Heart right ventricle (tissue), 16 donors: ENCODE measurements at regions of chrX and their contacts with region 1.

Region 1: GRCh38 chrX:4547213-4547836 is 833.9 kb upstream of the PRKX start:
- DNase-seq: peak in 1 of 2 donors; percentile 3
- ATAC-seq: no peak
- H3K4me3 ChIP-seq: no peak overlapping the region
- H3K27ac ChIP-seq: no peak overlapping the region
- H3K4me1 ChIP-seq: no peaks in the 10 kb centered on the region
- H3K27me3 ChIP-seq: no peaks in the 10 kb centered on the region
- CTCF ChIP-seq: peak; percentile 44 to 93 (median 68)

Region 2: GRCh38 chrX:5113128-5113527 is 565.8 kb after region 1 on chrX:
- intact Hi-C with region 1: loop called in 5 of 10 experiments (anchors 5 to 10 kb)
- DNase-seq: no peak
- ATAC-seq: no peak
- H3K4me3 ChIP-seq: no peak overlapping the region
- H3K27ac ChIP-seq: no peak overlapping the region
- H3K4me1 ChIP-seq: no peaks in the 10 kb centered on the region
- H3K27me3 ChIP-seq: no peaks in the 10 kb centered on the region
- CTCF ChIP-seq: peak in 4 of 9 donors; percentile 16 to 42 (median 34)

Region 3: GRCh38 chrX:5122175-5122678 is 574.9 kb after region 1 on chrX:
- intact Hi-C with region 1: loop called in 5 of 10 experiments (anchors 10 kb)
- DNase-seq: no peak
- ATAC-seq: no peak
- H3K4me3 ChIP-seq: no peak overlapping the region
- H3K27ac ChIP-seq: no peak overlapping the region
- H3K4me1 ChIP-seq: no peaks in the 10 kb centered on the region
- H3K27me3 ChIP-seq: no peaks in the 10 kb centered on the region
- CTCF ChIP-seq: no peak